Sigmoid colon (tissue), 7 donors: ENCODE measurements at regions of chr22 and their contacts with region 1.

Region 1: GRCh38 chr22:28600546-28601143 is 79.0 kb downstream of the TTC28 start:
- DNase-seq: no peak
- H3K4me3 ChIP-seq: no peak overlapping the region
- H3K27ac ChIP-seq: no peak overlapping the region
- H3K4me1 ChIP-seq: peaks cover 0 to 13% (median 0%) of the 10 kb centered on the region in 4 donors
- H3K27me3 ChIP-seq: no peaks in the 10 kb centered on the region
- CTCF ChIP-seq: peak in 3 of 4 experiments; percentile 47 to 55 (median 48)
- EP300 ChIP-seq: no peak
- POLR2A ChIP-seq: no peak

Region 2: DNA sequence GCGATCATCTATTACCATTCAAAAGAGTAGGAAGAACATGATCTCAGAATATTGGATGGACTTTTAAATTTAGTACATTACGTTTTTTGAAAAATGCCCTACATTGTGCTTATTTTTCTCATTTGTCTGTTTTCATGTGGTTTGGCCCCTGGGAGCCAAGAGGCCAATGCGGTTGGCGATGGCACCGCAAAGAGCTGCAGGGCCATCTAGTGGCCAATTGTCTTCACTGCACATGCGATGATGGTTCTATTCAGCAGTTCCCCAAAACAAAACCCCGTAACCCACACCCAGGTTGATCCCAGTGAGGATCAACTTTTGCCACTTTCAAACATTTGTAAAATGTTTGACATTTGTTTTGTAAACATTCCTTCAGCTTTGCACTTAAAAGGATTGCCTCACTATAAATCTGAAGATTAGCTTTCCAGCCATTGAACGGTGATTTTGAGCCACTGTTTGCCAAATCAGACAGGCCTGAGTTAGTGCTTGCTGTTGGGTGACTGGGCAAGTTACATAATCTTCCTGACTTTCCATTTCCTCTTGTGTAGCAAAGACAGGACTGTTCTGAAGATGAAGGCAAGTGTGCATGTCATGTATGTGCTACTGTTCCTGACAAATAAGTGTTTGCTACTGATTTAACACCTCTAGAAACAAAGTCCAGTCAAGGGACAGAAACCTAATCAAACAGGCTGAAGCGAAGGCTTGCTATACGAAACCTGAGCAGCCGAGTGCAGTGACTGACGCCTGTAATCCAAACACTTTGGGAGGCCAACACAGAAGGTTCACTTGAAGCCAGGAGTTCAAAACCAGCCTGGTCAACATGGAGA is 228.9 kb after region 1 on chr22:
- intact Hi-C with region 1: loop called (anchors 1 kb)
- DNase-seq: peak; percentile 89
- H3K4me3 ChIP-seq: no peak overlapping the region
- H3K27ac ChIP-seq: peak overlapping the region in 3 of 4 donors; percentile 9 to 39 (median 10)
- H3K4me1 ChIP-seq: peaks cover 0 to 12% (median 4%) of the 10 kb centered on the region in 4 donors
- H3K27me3 ChIP-seq: no peaks in the 10 kb centered on the region
- CTCF ChIP-seq: peak; percentile 95 to 98 (median 96)
- EP300 ChIP-seq: no peak
- POLR2A ChIP-seq: no peak

Region 3: GRCh38 chr22:29040385-29041275 is 440.0 kb after region 1 on chr22:
- intact Hi-C with region 1: loop called (anchors 5 kb)
- DNase-seq: peak; percentile 81
- H3K4me3 ChIP-seq: no peak overlapping the region
- H3K27ac ChIP-seq: no peak overlapping the region
- H3K4me1 ChIP-seq: peaks cover 0 to 21% (median 15%) of the 10 kb centered on the region in 4 donors
- H3K27me3 ChIP-seq: no peaks in the 10 kb centered on the region
- CTCF ChIP-seq: peak; percentile 87 to 97 (median 94)
- EP300 ChIP-seq: no peak
- POLR2A ChIP-seq: no peak